Common myeloid progenitor, CD34-positive (primary cell): ENCODE measurements at regions of chr1 and their contacts with region 1.

Region 1: GRCh38 chr1:165686121-165686970 is 12.0 kb downstream of the ALDH9A1 start:
- DNase-seq: peak; percentile 22 to 46 (median 42)
- H3K4me3 ChIP-seq: no peak overlapping the region
- H3K27ac ChIP-seq: no peak overlapping the region
- H3K4me1 ChIP-seq: peaks cover 0 to 6% (median 3%) of the 10 kb centered on the region in 4 experiments
- H3K27me3 ChIP-seq: no peaks in the 10 kb centered on the region

Region 2: DNA sequence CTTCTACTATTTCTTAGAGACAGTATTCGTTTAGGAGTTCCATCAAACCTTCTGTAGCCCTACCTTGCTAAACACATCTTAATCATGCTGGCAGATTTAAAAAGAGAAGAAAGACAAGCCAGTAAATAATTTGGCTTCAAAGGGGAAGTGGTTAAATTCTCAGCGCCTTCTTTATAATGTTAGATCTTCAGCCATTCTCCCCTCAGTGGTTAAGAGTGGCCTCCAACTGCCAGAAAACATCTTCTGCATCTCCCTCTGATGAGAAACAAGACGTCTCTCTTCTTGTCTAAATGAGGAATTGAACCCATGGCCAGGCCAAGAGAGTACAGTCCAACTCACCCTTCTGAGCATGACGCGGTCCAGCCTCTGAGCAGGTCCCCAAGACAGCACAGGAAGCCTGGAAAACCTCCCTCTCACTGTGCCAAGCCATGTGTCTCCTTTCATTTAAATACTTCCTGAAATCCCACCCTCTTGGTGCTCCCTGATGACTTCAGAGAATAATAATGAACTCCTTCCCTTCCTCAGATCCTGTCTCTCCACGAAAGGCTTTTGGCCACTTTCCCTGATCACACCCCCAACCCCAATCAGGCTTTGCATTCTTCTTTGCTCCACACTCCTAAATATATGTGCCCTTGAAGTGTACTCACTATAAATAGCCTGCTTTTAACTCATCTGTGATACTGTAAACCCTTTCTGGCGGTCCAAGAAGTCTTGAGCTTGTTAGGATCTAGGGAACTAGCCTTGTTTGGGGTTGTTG is 158.9 kb before region 1 on chr1:
- CTCF ChIA-PET with region 1: no interaction called
- POLR2A ChIA-PET with region 1: no interaction called
- DNase-seq: peak in 2 of 3 donors; percentile 60 to 66
- H3K4me3 ChIP-seq: no peak overlapping the region
- H3K27ac ChIP-seq: no peak overlapping the region
- H3K4me1 ChIP-seq: peaks cover 0 to 6% (median 0%) of the 10 kb centered on the region in 4 experiments
- H3K27me3 ChIP-seq: peaks cover 3 to 22% (median 12%) of the 10 kb centered on the region in 5 experiments

Region 3: GRCh38 chr1:165697881-165698760 is 11.8 kb after region 1 on chr1 and contains the start of gene ALDH9A1:
- CTCF ChIA-PET with region 1: interaction called, 11 read pairs
- POLR2A ChIA-PET with region 1: no interaction called
- DNase-seq: peak; percentile 89 to 90 (median 90)
- H3K4me3 ChIP-seq: peak within 1 kb of the TSS; percentile 87 to 99 (median 93)
- H3K27ac ChIP-seq: peak within 1 kb of the TSS; percentile 66 to 87
- H3K4me1 ChIP-seq: peaks cover 10 to 30% (median 22%) of the 10 kb centered on the region in 4 experiments
- H3K27me3 ChIP-seq: no peaks in the 10 kb centered on the region

Region 4: GRCh38 chr1:165837838-165838364 is 151.6 kb after region 1 on chr1:
- CTCF ChIA-PET with region 1: no interaction called
- POLR2A ChIA-PET with region 1: no interaction called
- DNase-seq: no peak
- H3K4me3 ChIP-seq: no peak overlapping the region
- H3K27ac ChIP-seq: no peak overlapping the region
- H3K4me1 ChIP-seq: peaks cover 7 to 61% (median 33%) of the 10 kb centered on the region in 4 experiments
- H3K27me3 ChIP-seq: no peaks in the 10 kb centered on the region